CD14-positive monocyte (primary cell): ENCODE measurements at regions of chr6 and their contacts with region 1.

Region 1: GRCh38 chr6:145814501-145815308 is at the start of gene FBXO30:
- DNase-seq: peak; percentile 87 to 89 (median 89)
- H3K4me3 ChIP-seq: peak within 1 kb of the TSS; percentile 53 to 97 (median 95)
- H3K4me3 Mint-ChIP-seq: peak within 1 kb of the TSS; percentile 90 to 95
- H3K27ac ChIP-seq: peak within 1 kb of the TSS; percentile 98 to 100
- H3K27ac Mint-ChIP-seq: peak within 1 kb of the TSS; percentile 96 to 98 (median 98)
- H3K4me1 ChIP-seq: peaks cover 16 to 42% of the 10 kb centered on the region in 2 donors
- H3K4me1 Mint-ChIP-seq: peaks cover 35% of the 10 kb centered on the region
- H3K27me3 ChIP-seq: no peaks in the 10 kb centered on the region
- H3K27me3 Mint-ChIP-seq: no peaks in the 10 kb centered on the region
- CTCF ChIP-seq: no peak
- polyA plus RNA-seq, gene FBXO30: 0.83 to 1.7 (median 1.1) TPM

Region 2: DNA sequence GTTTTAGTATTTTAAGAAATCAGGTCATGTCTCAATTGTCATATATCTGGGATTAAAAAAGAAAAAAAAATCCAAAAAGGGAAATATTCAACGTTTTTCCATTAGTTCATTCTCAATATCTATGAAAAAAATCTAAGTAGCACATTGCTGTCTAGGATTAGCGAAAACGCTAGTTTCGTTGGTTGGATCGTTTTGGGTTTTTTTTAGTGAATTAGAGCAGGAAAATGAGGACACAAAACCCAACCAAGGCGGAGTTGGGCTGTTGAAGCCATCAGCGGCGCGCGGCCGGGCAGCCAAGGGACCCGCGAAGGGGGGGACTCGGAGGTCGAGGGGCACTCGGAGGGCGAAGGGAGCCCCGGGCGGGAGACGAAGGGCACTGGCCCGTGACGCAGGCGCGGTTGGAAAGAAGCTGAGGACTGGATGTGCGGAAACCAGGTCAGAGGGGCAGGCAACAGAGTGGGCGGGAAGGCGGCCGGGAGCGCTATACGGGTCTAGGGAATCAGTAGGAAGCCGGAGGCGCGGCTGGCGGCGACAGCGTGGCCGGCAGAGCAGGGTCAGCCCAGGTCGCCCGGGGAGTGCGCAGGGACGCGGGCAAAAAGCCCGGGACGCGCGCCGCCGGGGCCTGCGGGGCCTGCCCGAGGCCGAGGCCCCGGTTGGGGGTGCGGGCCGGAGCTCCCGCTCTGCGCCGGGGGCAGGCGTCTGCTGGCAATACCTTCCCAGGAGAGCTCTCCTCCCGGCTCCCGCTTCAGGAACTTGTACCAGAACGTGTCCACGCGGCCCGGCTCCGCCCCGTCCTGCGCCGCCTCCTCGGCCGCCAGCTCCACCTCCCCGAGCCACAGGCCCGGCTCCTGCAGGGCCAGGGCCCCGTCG is 80.0 kb before region 1 on chr6:
- intact Hi-C with region 1: loop called in 1 of 2 experiments (anchors 10 kb)
- DNase-seq: peak in 2 of 3 donors; percentile 36 to 38
- H3K4me3 ChIP-seq: peak overlapping the region; percentile 74 to 89 (median 78)
- H3K4me3 Mint-ChIP-seq: peak overlapping the region; percentile 92 to 95
- H3K27ac ChIP-seq: peak overlapping the region; percentile 61 to 92
- H3K27ac Mint-ChIP-seq: peak overlapping the region; percentile 75 to 93 (median 84)
- H3K4me1 ChIP-seq: peaks cover 16 to 35% of the 10 kb centered on the region in 2 donors
- H3K4me1 Mint-ChIP-seq: peaks cover 42% of the 10 kb centered on the region
- H3K27me3 ChIP-seq: no peaks in the 10 kb centered on the region
- H3K27me3 Mint-ChIP-seq: no peaks in the 10 kb centered on the region
- CTCF ChIP-seq: no peak

Region 3: DNA sequence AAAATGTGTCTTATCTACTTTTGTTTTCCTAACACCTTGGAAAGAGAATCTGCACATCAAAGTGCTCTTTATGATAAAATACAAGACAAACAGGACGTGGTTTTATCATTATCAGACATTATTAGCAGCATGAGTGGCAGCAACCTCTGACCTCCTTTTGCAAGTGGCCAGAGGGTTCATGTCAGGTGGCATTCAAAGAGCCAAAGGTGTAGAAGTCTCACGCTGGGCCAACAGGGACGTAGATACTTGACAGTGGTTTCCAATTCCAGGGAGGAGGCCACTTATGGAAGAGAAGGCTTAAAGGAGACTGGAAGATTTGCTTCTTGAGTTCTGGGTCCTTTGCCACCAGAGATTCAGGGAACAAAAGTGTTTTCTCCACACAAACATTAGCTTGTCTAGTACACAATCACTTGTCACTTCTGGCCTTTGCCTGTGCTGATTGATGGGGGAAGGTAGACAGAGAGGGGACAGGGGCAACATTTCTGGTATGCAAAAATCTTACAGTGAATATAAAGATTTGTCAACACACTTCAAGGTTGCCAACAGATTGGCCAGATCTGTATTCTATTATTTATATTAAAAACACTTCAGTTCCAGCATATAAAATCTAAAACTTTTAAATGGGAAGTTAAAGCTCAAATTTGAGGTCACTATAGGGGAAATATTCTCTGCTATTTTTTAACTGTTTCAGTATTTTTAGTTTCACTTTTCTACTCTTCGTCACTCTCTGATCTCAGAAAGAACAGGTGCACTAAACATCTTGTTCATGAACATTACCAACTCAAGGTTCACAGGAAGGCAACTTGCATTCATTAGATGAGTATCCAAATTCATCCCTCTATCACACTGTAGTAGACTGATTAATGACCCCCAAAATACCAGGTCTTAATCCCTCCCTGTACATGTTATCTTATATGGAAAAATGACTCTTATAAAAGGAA is 52.0 kb after region 1 on chr6:
- intact Hi-C with region 1: loop called in 1 of 2 experiments (anchors 10 kb)
- DNase-seq: no peak
- H3K4me3 ChIP-seq: peak overlapping the region in 1 of 3 experiments; percentile 35
- H3K4me3 Mint-ChIP-seq: peak overlapping the region; percentile 32 to 69
- H3K27ac ChIP-seq: peak overlapping the region; percentile 2 to 54
- H3K27ac Mint-ChIP-seq: peak overlapping the region in 6 of 7 donors; percentile 0 to 86 (median 72)
- H3K4me1 ChIP-seq: peaks cover 41 to 48% of the 10 kb centered on the region in 2 donors
- H3K4me1 Mint-ChIP-seq: peaks cover 43% of the 10 kb centered on the region
- H3K27me3 ChIP-seq: no peaks in the 10 kb centered on the region
- H3K27me3 Mint-ChIP-seq: peaks cover 0 to under 1% (median 0%) of the 10 kb centered on the region in 3 donors
- CTCF ChIP-seq: no peak